IMR-90 (cell line): ENCODE measurements at regions of chr1 and their contacts with region 1.

Region 1: DNA sequence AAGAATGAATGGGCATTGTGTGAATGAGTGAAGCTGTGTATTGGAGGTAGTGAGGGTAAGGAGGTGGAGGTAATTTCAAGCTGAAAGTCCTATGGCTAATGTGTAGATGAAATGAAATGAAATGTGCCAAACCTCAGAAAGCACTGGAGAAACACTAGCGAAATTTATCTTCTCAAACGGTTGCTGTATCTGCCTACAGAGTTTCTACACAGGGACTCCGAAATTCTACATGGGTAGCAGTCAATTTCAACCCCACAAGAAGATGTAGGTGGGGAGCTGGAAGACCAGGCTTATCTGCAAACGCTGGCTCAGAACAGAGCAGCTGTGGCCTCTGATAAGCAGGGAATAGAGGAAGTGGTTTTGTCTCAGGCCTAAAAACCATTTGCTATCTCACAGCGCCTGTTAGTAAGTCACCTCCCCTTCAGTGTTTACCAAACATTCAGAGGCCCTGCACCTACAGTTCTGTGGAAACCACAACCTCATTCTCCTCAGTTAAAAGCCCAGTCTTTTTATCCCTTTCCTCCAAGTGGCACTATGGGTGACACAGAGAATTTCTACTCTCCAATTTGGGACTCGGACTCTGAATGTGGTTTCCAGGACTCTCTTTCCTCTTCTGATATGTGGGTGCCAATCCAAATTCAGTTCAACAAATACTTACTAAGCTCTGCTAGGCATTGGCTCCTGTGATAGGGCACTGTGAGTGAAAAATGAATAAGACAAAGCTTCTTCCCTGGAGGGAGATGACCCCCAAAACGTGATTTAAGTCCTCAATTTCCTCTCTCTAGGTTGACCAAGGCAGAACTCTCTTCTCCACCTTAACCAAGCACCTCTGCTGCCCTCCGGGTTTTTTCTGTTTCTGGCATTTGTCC is 17.2 kb upstream of the SLAMF6 start:
- DNase-seq: no peak
- ATAC-seq: no peak
- H3K4me3 ChIP-seq: no peak overlapping the region
- H3K27ac ChIP-seq: no peak overlapping the region
- H3K4me1 ChIP-seq: no peaks in the 10 kb centered on the region
- H3K27me3 ChIP-seq: no peaks in the 10 kb centered on the region
- CTCF ChIP-seq: no peak
- POLR2A ChIP-seq: no peak
- RAD21 ChIP-seq: no peak

Region 2: GRCh38 chr1:160189649-160190625 is 350.3 kb before region 1 on chr1 and contains the start of gene CASQ1:
- CTCF ChIA-PET with region 1: no interaction called
- POLR2A ChIA-PET with region 1: no interaction called
- dilution Hi-C with region 1: no loop called
- in situ Hi-C with region 1: no loop called
- intact Hi-C with region 1: no loop called
- DNase-seq: peak; percentile 31
- ATAC-seq: peak; percentile 9; the same call in 1 of the 2 replicates
- H3K4me3 ChIP-seq: no peak within 1 kb of the TSS
- H3K27ac ChIP-seq: no peak within 1 kb of the TSS
- H3K4me1 ChIP-seq: peaks cover 4% of the 10 kb centered on the region
- H3K27me3 ChIP-seq: peaks cover 18% of the 10 kb centered on the region
- CTCF ChIP-seq: no peak
- POLR2A ChIP-seq: no peak
- RAD21 ChIP-seq: no peak
- total RNA-seq, gene CASQ1: 0.18 TPM in 1 of 2 replicates, not detected in the other

Region 3: DNA sequence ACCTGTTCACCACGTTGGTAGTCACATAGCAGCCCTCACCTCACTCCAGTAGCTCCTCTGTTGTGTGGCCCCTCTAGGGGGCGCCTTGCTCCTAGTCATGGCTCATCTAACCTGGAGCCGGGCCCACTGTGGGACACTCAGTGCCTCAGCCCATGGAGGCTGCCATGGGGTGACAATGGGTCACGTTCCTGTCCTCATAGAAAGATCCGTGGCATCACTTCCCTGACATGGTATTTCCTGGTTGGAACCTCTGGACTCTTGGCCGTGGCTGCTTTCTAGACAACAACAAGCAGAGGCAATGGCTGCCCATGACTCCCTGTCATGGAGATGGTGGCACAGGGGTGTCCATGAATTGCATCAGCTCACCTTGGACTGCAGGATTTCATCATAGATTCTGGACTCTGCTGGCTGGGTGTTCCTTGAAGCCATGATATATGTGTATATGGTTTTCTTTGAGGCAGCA is 10.4 kb after region 1 on chr1:
- CTCF ChIA-PET with region 1: interaction called, 10 read pairs
- POLR2A ChIA-PET with region 1: no interaction called
- dilution Hi-C with region 1: no loop called
- in situ Hi-C with region 1: no loop called
- intact Hi-C with region 1: no loop called
- DNase-seq: no peak
- ATAC-seq: no peak
- H3K4me3 ChIP-seq: no peak overlapping the region
- H3K27ac ChIP-seq: no peak overlapping the region
- H3K4me1 ChIP-seq: no peaks in the 10 kb centered on the region
- H3K27me3 ChIP-seq: no peaks in the 10 kb centered on the region
- CTCF ChIP-seq: no peak
- POLR2A ChIP-seq: no peak
- RAD21 ChIP-seq: no peak